PC-9 (cell line): ENCODE measurements at regions of chr12 and their contacts with region 1.

Region 1: GRCh38 chr12:32043928-32044549 is 62.6 kb upstream of the BICD1 start:
- DNase-seq: no peak
- H3K4me3 ChIP-seq: no peak overlapping the region
- H3K27ac ChIP-seq: no peak overlapping the region
- H3K4me1 ChIP-seq: no peaks in the 10 kb centered on the region
- H3K27me3 ChIP-seq: no peaks in the 10 kb centered on the region
- CTCF ChIP-seq: no peak

Region 2: GRCh38 chr12:31672521-31672920 is 371.5 kb before region 1 on chr12:
- CTCF ChIA-PET with region 1: no interaction called
- POLR2A ChIA-PET with region 1: no interaction called
- intact Hi-C with region 1: loop called (anchors 5 kb)
- DNase-seq: no peak
- H3K4me3 ChIP-seq: no peak overlapping the region
- H3K27ac ChIP-seq: no peak overlapping the region
- H3K4me1 ChIP-seq: no peaks in the 10 kb centered on the region
- H3K27me3 ChIP-seq: no peaks in the 10 kb centered on the region
- CTCF ChIP-seq: no peak

Region 3: DNA sequence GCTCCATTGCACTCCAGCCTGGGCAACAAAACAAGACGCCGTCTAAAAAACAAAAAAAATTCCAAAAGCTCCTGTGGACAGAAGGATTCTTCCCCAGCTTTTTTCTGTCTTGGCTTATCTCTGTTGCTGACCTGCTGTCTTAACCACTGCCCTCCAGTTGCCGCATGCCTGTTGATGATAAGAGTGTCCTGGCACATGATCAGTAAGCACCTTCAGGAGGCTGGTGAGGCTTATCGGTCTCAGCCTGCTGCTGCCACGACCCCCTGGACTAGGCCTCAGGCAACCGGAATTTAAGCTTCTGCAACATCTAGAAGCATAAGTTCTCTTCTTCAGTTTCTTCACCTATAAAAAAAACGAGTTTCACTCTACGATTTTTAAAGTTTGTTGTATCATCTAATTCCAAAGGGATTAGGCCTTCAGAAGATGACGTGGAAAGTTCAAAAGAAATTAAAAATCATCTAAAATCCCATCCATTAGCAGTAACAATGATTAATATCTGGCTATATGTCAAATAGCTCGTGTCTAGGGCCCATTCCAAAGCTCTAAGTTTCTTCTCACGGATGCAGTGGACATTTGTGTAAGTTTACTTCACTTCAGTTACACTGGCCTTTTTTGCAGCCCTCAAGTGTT is 38.4 kb before region 1 on chr12:
- CTCF ChIA-PET with region 1: no interaction called
- POLR2A ChIA-PET with region 1: no interaction called
- intact Hi-C with region 1: no loop called
- DNase-seq: no peak
- H3K4me3 ChIP-seq: no peak overlapping the region
- H3K27ac ChIP-seq: no peak overlapping the region
- H3K4me1 ChIP-seq: no peaks in the 10 kb centered on the region
- H3K27me3 ChIP-seq: no peaks in the 10 kb centered on the region
- CTCF ChIP-seq: no peak

Region 4: GRCh38 chr12:32025906-32026305 is 18.1 kb before region 1 on chr12:
- CTCF ChIA-PET with region 1: no interaction called
- POLR2A ChIA-PET with region 1: no interaction called
- intact Hi-C with region 1: no loop called
- DNase-seq: no peak
- H3K4me3 ChIP-seq: no peak overlapping the region
- H3K27ac ChIP-seq: no peak overlapping the region
- H3K4me1 ChIP-seq: no peaks in the 10 kb centered on the region
- H3K27me3 ChIP-seq: no peaks in the 10 kb centered on the region
- CTCF ChIP-seq: no peak

Region 5: GRCh38 chr12:32242641-32243040 is 198.6 kb after region 1 on chr12:
- CTCF ChIA-PET with region 1: no interaction called
- POLR2A ChIA-PET with region 1: interaction called, 15 read pairs
- intact Hi-C with region 1: no loop called
- DNase-seq: no peak
- H3K4me3 ChIP-seq: no peak overlapping the region
- H3K27ac ChIP-seq: no peak overlapping the region
- H3K4me1 ChIP-seq: no peaks in the 10 kb centered on the region
- H3K27me3 ChIP-seq: no peaks in the 10 kb centered on the region
- CTCF ChIP-seq: no peak